MCF 10A (cell line): ENCODE measurements at regions of chr6 and their contacts with region 1.

Region 1: DNA sequence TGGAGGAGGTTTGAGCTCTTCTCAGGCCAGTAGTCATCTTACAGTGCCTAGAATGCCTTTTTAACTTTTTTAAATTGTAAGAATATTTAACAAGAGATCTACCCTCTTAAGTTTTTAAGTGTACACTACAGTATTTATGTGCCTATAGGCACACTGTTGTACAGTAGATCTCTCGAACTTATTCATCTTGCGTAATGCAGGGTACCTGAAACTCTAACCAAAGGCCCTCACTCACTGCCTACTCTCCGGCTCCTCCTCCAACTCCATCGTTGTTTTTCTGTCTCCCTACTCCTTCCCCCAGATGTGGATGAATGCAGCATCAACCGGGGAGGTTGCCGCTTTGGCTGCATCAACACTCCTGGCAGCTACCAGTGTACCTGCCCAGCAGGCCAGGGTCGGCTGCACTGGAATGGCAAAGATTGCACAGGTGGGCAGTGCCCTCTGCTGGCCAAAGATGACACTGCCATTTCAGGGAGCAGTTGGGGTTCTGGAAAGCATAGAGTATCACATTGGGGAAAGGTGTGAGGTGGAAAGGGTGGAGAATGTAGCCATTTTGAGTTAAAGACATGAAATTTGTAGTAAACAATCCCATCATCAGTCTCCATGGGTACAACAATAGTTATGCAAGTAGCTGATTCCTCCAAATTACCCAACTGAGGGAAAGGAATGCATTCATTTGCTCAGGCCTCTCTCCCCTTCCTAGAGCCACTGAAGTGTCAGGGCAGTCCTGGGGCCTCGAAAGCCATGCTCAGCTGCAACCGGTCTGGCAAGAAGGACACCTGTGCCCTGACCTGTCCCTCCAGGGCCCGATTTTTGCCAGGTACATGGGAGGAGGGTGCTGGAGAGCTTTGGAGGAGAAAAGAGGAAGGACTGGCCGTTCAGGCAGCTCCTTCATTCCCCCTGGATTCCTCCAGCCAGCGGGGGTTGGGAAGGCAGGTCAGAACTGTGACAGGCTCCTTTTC is 18.4 kb upstream of the ZNF76 start:
- DNase-seq: peak; percentile 75
- H3K4me3 Mint-ChIP-seq: no peak overlapping the region
- H3K27ac Mint-ChIP-seq: peak overlapping the region; percentile 73
- H3K4me1 Mint-ChIP-seq: peaks cover 11% of the 10 kb centered on the region
- H3K27me3 Mint-ChIP-seq: no peaks in the 10 kb centered on the region
- CTCF ChIP-seq: peak; percentile 97

Region 2: GRCh38 chr6:34986845-34987246 is 254.3 kb before region 1 on chr6:
- CTCF ChIA-PET with region 1: interaction called, 14 read pairs
- POLR2A ChIA-PET with region 1: no interaction called
- intact Hi-C with region 1: loop called (anchors 2 kb)
- DNase-seq: peak; percentile 78
- H3K4me3 Mint-ChIP-seq: no peak overlapping the region
- H3K27ac Mint-ChIP-seq: no peak overlapping the region
- H3K4me1 Mint-ChIP-seq: no peaks in the 10 kb centered on the region
- H3K27me3 Mint-ChIP-seq: no peaks in the 10 kb centered on the region
- CTCF ChIP-seq: peak; percentile 84

Region 3: DNA sequence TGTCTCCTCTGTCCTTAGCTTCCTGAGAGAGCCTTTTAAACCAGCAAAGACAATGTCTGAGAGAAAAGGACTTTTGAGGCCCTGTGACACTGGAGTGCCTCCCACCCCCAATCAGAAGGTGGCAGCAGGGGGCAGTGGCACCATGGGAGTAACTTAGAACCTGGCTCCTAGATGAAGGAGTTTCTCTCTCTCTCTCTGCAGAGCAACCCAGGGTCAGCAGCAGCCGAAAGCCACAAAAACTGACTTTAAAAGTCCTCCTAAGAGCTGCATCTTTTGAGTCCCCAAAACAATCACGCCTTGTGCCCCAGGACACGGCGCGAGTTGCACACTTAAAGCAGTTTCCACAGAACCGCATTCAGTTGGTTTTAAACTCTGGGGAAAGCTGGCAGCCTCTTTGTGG is 94.7 kb before region 1 on chr6:
- CTCF ChIA-PET with region 1: interaction called, 80 read pairs
- POLR2A ChIA-PET with region 1: no interaction called
- intact Hi-C with region 1: loop called (anchors 1 kb)
- DNase-seq: peak; percentile 65
- H3K4me3 Mint-ChIP-seq: no peak overlapping the region
- H3K27ac Mint-ChIP-seq: no peak overlapping the region
- H3K4me1 Mint-ChIP-seq: peaks cover 17% of the 10 kb centered on the region
- H3K27me3 Mint-ChIP-seq: no peaks in the 10 kb centered on the region
- CTCF ChIP-seq: peak; percentile 49

Region 4: GRCh38 chr6:35173427-35174087 is 67.6 kb before region 1 on chr6:
- CTCF ChIA-PET with region 1: no interaction called
- POLR2A ChIA-PET with region 1: no interaction called
- intact Hi-C with region 1: no loop called
- DNase-seq: no peak
- H3K4me3 Mint-ChIP-seq: no peak overlapping the region
- H3K27ac Mint-ChIP-seq: peak overlapping the region; percentile 47
- H3K4me1 Mint-ChIP-seq: peaks cover 15% of the 10 kb centered on the region
- H3K27me3 Mint-ChIP-seq: no peaks in the 10 kb centered on the region
- CTCF ChIP-seq: no peak

Region 5: GRCh38 chr6:35202066-35202546 is 39.0 kb before region 1 on chr6:
- CTCF ChIA-PET with region 1: interaction called, 91 read pairs
- POLR2A ChIA-PET with region 1: no interaction called
- intact Hi-C with region 1: loop called (anchors 2 kb)
- DNase-seq: no peak
- H3K4me3 Mint-ChIP-seq: no peak overlapping the region
- H3K27ac Mint-ChIP-seq: no peak overlapping the region
- H3K4me1 Mint-ChIP-seq: peaks cover 4% of the 10 kb centered on the region
- H3K27me3 Mint-ChIP-seq: peaks cover 29% of the 10 kb centered on the region
- CTCF ChIP-seq: no peak

Region 6: GRCh38 chr6:35230950-35231349 is 10.2 kb before region 1 on chr6:
- CTCF ChIA-PET with region 1: interaction called, 59 read pairs
- POLR2A ChIA-PET with region 1: interaction called, 3 read pairs
- intact Hi-C with region 1: no loop called
- DNase-seq: peak; percentile 20
- H3K4me3 Mint-ChIP-seq: no peak overlapping the region
- H3K27ac Mint-ChIP-seq: no peak overlapping the region
- H3K4me1 Mint-ChIP-seq: peaks cover 10% of the 10 kb centered on the region
- H3K27me3 Mint-ChIP-seq: no peaks in the 10 kb centered on the region
- CTCF ChIP-seq: no peak